ENCODE measurements at regions of chr12 and their contacts with region 1.

Region 1: DNA sequence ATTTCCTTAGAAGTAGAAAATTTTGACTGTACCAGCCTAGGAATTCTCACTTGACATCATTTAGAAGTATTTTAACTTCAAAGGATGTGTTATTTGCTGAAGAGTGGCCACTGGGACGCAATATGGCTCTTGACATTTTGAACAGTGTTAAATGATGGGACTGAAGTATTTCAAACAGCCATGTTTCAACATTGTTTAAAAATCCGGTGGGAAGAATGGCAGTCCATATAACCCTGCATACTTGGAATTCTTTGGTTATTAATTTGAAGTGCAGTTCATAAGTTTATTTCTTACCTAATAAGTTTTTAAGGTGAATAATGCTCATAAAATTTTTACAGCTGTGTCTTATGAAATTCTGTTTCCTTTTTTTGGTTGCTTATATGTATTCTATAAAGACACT is 8.2 kb downstream of the TMTC2 start:
- DNase-seq: no peak
- ATAC-seq: no peak
- H3K4me3 ChIP-seq: no peak overlapping the region
- H3K27ac ChIP-seq: no peak overlapping the region
- H3K4me1 ChIP-seq: no peaks in the 10 kb centered on the region
- H3K27me3 ChIP-seq: no peaks in the 10 kb centered on the region
- CTCF ChIP-seq: no peak
- EP300 ChIP-seq: no peak
- POLR2A ChIP-seq: no peak
- RAD21 ChIP-seq: no peak

Region 2: GRCh38 chr12:82660541-82661325 is 34.2 kb before region 1 on chr12:
- CTCF ChIA-PET with region 1: no interaction called
- POLR2A ChIA-PET with region 1: no interaction called
- RAD21 ChIA-PET with region 1: no interaction called
- SMC1A ChIA-PET with region 1: no interaction called
- in situ Hi-C with region 1: no loop called
- intact Hi-C with region 1: no loop called
- DNase-seq: no peak
- ATAC-seq: no peak
- H3K4me3 ChIP-seq: no peak overlapping the region
- H3K27ac ChIP-seq: no peak overlapping the region
- H3K4me1 ChIP-seq: no peaks in the 10 kb centered on the region
- H3K27me3 ChIP-seq: no peaks in the 10 kb centered on the region
- CTCF ChIP-seq: no peak
- EP300 ChIP-seq: no peak
- POLR2A ChIP-seq: no peak
- RAD21 ChIP-seq: no peak

Region 3: GRCh38 chr12:82709794-82710355 is 14.9 kb after region 1 on chr12:
- CTCF ChIA-PET with region 1: interaction called, 4 read pairs
- POLR2A ChIA-PET with region 1: no interaction called
- RAD21 ChIA-PET with region 1: interaction called, 3 read pairs
- SMC1A ChIA-PET with region 1: interaction called, 11 read pairs
- in situ Hi-C with region 1: no loop called
- intact Hi-C with region 1: no loop called
- DNase-seq: no peak
- ATAC-seq: no peak
- H3K4me3 ChIP-seq: no peak overlapping the region
- H3K27ac ChIP-seq: no peak overlapping the region
- H3K4me1 ChIP-seq: no peaks in the 10 kb centered on the region; the same call in 1 of the 2 replicates
- H3K27me3 ChIP-seq: no peaks in the 10 kb centered on the region
- CTCF ChIP-seq: no peak
- EP300 ChIP-seq: no peak
- POLR2A ChIP-seq: no peak
- RAD21 ChIP-seq: no peak